HCT116 (cell line): ENCODE measurements at regions of chr17 and their contacts with region 1.

Region 1: GRCh38 chr17:75069783-75070182 is 18.0 kb upstream of the SLC16A5 start:
- DNase-seq: no peak
- ATAC-seq: peak; percentile 76
- H3K4me3 ChIP-seq: no peak overlapping the region
- H3K27ac ChIP-seq: no peak overlapping the region
- H3K4me1 ChIP-seq: peaks cover 14% of the 10 kb centered on the region in 2 experiments
- H3K27me3 ChIP-seq: no peaks in the 10 kb centered on the region
- CTCF ChIP-seq: peak; percentile 55 to 87 (median 57)
- POLR2A ChIP-seq: no peak
- RAD21 ChIP-seq: peak; percentile 90

Region 2: GRCh38 chr17:74864866-74865395 is 204.9 kb before region 1 on chr17:
- CTCF ChIA-PET with region 1: no interaction called
- POLR2A ChIA-PET with region 1: no interaction called
- RAD21 ChIA-PET with region 1: no interaction called
- intact Hi-C with region 1: no loop called
- DNase-seq: peak; percentile 44
- ATAC-seq: peak; percentile 80
- H3K4me3 ChIP-seq: no peak overlapping the region
- H3K27ac ChIP-seq: peak overlapping the region; percentile 7
- H3K4me1 ChIP-seq: peaks cover 0 to 17% of the 10 kb centered on the region in 2 experiments; a peak in 1 of 4 replicates
- H3K27me3 ChIP-seq: no peaks in the 10 kb centered on the region
- CTCF ChIP-seq: peak; percentile 89 to 100 (median 100)
- POLR2A ChIP-seq: no peak
- RAD21 ChIP-seq: no peak; the same call in 1 of the 2 replicates

Region 3: DNA sequence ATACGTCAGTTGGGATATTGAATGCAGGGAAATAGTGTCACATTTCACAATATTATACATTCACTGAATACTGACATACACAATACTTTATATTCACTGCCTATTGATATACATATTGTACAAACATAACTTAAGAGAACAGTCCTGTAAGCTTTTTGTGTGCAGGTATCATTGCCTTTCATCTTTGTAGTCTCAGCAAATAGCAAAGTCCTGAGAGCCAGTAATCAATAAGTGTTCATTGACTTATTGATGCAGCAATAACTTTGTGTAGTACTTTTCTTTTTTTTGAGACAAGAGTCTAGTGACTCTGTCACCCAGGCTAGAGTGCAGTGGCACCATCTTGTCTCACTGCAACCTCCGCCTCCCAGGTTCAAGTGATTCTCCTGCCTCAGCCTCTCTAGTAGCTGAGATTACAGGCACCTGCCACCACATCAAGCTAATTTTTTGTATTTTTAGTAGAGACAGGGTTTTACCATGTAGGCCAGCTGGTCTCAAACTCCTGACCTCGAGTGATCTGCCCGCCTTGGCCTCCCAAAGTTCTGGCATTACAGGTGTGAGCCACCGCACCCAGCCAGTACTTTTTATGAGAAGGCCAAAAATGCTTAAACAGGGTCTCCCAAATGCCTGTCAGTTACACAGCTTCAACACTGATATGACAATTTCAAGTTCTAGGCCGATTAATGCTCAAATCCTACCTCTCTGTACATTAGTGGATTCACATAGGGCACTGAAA is 130.3 kb after region 1 on chr17:
- CTCF ChIA-PET with region 1: interaction called, 25 read pairs
- POLR2A ChIA-PET with region 1: no interaction called
- RAD21 ChIA-PET with region 1: interaction called in 1 of 2 experiments, 10 read pairs
- intact Hi-C with region 1: loop called (anchors 5 kb)
- DNase-seq: no peak
- ATAC-seq: no peak
- H3K4me3 ChIP-seq: no peak overlapping the region
- H3K27ac ChIP-seq: peak overlapping the region; percentile 62
- H3K4me1 ChIP-seq: peaks cover 20 to 37% of the 10 kb centered on the region in 2 experiments
- H3K27me3 ChIP-seq: no peaks in the 10 kb centered on the region
- CTCF ChIP-seq: no peak
- POLR2A ChIP-seq: no peak
- RAD21 ChIP-seq: no peak